Dendritic cell treated with granulocyte-macrophage colony-stimulating factor and Interleukin-4, amounts not matched to agents 40 ng/mL and 50 ng/mL, for 4 days (primary cell): ENCODE measurements at regions of chr11 and their contacts with region 1.

Region 1: GRCh38 chr11:62787005-62787759 is at the start of gene TMEM179B:
- H3K4me3 Mint-ChIP-seq: peak within 1 kb of the TSS; percentile 95
- H3K27ac Mint-ChIP-seq: peak within 1 kb of the TSS; percentile 95
- H3K4me1 Mint-ChIP-seq: peaks cover 42% of the 10 kb centered on the region
- H3K27me3 Mint-ChIP-seq: no peaks in the 10 kb centered on the region

Region 2: DNA sequence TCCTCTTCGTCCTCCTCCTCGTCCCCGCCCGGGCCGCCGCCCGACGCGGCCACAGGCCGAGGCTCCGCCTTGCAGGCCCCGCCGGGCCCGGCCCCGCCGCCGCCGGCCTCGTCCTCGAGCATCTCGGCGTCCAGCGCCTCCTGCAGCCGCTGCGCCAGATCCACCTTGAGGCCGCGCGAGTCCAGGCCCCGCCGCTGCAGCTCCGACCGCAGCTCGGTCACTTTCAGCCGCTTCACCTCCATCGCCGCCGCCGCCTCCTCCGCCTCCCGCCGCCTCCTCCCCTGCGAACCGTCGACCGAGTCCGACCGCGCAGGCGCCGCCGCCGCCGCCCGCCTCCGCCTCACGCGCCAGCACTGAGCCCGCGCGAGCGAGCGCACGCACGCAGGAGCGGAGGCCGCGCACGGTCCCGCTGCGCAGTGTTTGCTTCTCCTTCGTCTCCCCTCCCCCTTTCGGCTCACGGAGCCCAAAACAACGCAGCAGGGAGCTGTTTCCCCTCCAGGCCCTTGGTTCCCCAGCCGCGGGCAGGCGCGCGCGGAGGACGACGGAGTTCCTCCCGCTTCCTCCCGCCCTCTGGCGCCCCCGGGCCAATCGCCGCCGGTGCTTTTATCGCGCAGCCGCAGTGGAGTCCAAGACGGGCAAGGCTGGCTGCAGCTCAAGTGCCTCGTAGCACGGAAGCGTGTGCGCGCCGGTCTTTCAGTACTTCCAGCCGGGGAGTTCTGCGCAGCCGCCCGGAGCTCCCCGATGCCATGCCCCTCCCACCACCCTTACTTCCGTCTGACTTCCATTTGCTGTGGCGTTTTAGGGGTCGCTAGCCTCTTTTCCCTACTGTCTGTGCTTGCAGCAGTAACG is 60.0 kb before region 1 on chr11 and contains the start of gene HNRNPUL2:
- intact Hi-C with region 1: no loop called
- H3K4me3 Mint-ChIP-seq: peak within 1 kb of the TSS; percentile 95
- H3K27ac Mint-ChIP-seq: peak within 1 kb of the TSS; percentile 97
- H3K4me1 Mint-ChIP-seq: peaks cover 46% of the 10 kb centered on the region
- H3K27me3 Mint-ChIP-seq: no peaks in the 10 kb centered on the region

Region 3: DNA sequence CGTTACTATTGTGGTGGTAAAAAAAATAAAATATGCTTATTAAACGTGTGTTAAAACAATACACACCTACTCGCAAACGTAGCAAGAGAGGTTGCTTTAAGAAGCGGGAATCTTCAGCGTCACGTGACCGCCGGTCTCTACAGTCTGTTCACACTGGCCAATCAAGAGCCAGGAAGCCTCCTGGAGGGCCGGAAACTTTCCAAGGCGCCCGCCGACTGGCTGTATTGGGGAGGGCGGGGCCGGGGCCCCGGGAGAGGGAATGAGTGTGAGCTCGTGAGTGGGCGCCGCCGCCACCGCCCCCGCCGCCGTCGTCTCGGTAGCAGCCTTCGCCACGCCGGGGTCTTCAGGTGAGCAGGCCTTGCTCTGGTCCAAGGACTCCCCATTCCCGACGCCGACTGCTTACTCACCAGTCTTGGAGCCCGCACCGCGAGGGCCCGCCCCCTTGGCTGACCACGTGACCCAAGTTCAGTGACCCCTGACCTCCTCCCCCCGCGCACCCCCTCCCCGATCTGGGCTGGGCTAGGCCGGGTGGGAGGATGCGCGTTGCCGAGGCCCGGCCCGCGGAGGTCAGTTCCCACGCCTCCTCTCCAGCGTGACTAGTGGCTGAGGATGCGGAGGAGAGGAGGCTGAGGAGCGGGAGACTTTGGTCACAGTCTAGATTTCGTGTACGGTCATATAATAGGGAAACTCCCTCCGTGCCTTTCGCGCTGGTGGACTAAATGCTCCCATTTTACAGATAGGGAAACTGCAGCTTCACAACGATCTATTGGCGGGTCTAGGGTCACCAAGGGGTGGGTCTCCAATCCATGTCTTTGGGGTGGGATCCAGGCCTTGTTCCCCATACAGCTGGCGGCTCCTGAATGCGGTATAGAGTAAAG is 15.8 kb before region 1 on chr11 and contains the start of gene TAF6L:
- intact Hi-C with region 1: no loop called
- H3K4me3 Mint-ChIP-seq: peak within 1 kb of the TSS; percentile 85
- H3K27ac Mint-ChIP-seq: peak within 1 kb of the TSS; percentile 96
- H3K4me1 Mint-ChIP-seq: peaks cover 45% of the 10 kb centered on the region
- H3K27me3 Mint-ChIP-seq: no peaks in the 10 kb centered on the region

Region 4: DNA sequence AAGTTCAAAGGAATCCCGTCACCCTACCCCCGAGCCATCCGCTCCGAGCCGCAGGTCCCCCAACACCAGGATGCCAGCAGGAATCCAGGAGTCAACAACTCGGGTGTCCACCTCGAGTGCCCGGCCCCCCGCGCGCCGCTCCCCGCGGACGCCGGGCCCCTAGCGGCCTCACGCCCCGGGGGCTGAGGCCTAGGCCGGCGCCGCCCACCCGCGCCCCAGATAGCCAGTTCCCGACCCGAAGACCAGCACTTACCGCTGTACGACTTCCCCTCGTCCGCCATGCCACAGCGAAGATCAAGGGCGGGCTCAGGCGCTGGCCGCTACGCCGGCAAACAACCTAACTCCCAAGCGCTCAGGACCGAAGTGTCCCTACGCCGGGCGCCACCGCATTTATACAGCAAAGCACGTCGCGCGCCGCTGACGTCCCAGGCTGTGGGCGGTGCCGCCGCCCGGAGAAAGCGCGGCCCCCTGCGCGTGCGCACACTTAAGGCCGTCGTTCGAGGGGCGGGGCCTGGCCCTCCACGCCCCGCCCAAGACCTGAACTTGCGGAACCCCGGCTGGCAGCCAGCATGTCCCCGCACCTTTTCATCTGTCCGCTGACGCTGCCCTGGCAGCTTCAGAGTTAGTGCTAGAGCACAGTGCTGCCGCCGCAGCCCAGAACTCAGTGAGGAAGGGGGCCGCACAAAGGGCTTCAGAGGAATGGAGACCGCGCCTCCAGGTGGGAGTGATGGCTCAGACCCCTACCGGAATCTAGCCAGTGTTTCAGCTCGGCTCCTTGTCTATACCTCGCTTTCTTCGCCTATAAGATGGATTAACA is 18.1 kb after region 1 on chr11 and contains the start of gene NXF1:
- intact Hi-C with region 1: loop called (anchors 2 kb)
- H3K4me3 Mint-ChIP-seq: peak within 1 kb of the TSS; percentile 83
- H3K27ac Mint-ChIP-seq: peak within 1 kb of the TSS; percentile 89
- H3K4me1 Mint-ChIP-seq: peaks cover 56% of the 10 kb centered on the region
- H3K27me3 Mint-ChIP-seq: no peaks in the 10 kb centered on the region

Region 5: DNA sequence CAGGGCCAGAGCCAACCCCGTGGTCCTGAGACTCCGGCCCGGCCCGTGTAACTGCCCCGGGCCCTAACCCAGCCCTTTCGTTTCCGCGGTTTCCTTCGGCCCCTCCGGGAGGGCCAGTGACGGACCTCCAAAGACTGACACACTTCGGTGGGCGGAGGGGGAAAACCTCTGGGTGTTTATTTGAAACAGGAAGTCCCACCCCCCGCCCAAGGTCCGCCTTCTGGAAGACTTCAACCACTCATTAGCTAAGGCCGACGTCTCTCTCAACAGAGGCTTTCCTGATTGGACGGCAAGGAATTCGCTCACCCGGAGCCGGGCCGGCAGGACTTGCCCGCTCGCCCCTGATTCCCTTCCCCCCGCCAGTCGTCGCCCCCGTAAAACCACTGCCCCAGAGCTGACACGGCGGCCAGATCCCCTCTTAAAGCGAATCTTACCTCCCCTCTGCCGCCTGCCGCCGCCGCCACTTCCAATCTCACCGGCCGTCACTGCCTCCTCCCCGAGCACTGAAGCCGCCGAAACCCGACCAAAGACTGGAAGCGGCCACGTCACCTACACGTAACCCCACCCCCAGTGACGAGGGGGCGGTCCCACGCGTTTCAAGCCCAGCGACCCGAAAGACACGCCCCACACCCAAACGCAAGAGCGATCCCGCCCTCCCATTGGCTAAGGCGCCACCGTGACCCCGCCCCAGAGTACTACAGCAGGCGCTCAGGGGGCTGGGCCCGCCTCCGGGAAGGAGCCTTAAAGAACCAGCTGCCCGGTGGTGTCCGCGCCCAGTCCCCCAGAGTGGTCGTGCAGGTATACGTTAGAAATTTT is 44.5 kb after region 1 on chr11 and contains the start of gene STX5:
- intact Hi-C with region 1: loop called (anchors 2 kb)
- H3K4me3 Mint-ChIP-seq: peak within 1 kb of the TSS; percentile 95
- H3K27ac Mint-ChIP-seq: peak within 1 kb of the TSS; percentile 94
- H3K4me1 Mint-ChIP-seq: peaks cover 53% of the 10 kb centered on the region
- H3K27me3 Mint-ChIP-seq: no peaks in the 10 kb centered on the region

Region 6: DNA sequence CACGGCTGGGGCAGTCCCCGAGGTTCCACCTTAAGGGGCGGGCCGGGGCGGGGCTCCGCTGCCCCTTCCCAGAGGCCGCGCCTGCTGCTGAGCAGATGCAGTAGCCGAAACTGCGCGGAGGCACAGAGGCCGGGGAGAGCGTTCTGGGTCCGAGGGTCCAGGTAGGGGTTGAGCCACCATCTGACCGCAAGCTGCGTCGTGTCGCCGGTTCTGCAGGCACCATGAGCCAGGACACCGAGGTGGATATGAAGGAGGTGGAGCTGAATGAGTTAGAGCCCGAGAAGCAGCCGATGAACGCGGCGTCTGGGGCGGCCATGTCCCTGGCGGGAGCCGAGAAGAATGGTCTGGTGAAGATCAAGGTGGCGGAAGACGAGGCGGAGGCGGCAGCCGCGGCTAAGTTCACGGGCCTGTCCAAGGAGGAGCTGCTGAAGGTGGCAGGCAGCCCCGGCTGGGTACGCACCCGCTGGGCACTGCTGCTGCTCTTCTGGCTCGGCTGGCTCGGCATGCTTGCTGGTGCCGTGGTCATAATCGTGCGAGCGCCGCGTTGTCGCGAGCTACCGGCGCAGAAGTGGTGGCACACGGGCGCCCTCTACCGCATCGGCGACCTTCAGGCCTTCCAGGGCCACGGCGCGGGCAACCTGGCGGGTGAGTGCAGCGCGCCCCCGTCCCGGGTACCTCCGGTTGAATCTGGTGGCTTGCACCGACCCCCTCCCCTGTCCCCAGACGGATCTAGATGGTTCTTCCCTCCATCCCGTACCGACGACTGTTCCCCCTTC is 93.8 kb after region 1 on chr11 and contains the start of gene SLC3A2:
- intact Hi-C with region 1: loop called (anchors 1 kb)
- H3K4me3 Mint-ChIP-seq: peak within 1 kb of the TSS; percentile 96
- H3K27ac Mint-ChIP-seq: peak within 1 kb of the TSS; percentile 99
- H3K4me1 Mint-ChIP-seq: peaks cover 54% of the 10 kb centered on the region
- H3K27me3 Mint-ChIP-seq: no peaks in the 10 kb centered on the region